MCF 10A (cell line): ENCODE measurements at regions of chr1 and their contacts with region 1.

Region 1: GRCh38 chr1:208132287-208132883 is 111.8 kb downstream of the PLXNA2 start:
- DNase-seq: peak; percentile 96
- H3K4me3 Mint-ChIP-seq: peak overlapping the region; percentile 12
- H3K27ac Mint-ChIP-seq: peak overlapping the region; percentile 74
- H3K4me1 Mint-ChIP-seq: peaks cover 31% of the 10 kb centered on the region
- H3K27me3 Mint-ChIP-seq: no peaks in the 10 kb centered on the region
- CTCF ChIP-seq: peak; percentile 99

Region 2: GRCh38 chr1:208071435-208072031 is 60.9 kb before region 1 on chr1:
- CTCF ChIA-PET with region 1: interaction called, 12 read pairs
- POLR2A ChIA-PET with region 1: no interaction called
- intact Hi-C with region 1: no loop called
- DNase-seq: no peak
- H3K4me3 Mint-ChIP-seq: no peak overlapping the region
- H3K27ac Mint-ChIP-seq: no peak overlapping the region
- H3K4me1 Mint-ChIP-seq: no peaks in the 10 kb centered on the region
- H3K27me3 Mint-ChIP-seq: no peaks in the 10 kb centered on the region
- CTCF ChIP-seq: no peak

Region 3: DNA sequence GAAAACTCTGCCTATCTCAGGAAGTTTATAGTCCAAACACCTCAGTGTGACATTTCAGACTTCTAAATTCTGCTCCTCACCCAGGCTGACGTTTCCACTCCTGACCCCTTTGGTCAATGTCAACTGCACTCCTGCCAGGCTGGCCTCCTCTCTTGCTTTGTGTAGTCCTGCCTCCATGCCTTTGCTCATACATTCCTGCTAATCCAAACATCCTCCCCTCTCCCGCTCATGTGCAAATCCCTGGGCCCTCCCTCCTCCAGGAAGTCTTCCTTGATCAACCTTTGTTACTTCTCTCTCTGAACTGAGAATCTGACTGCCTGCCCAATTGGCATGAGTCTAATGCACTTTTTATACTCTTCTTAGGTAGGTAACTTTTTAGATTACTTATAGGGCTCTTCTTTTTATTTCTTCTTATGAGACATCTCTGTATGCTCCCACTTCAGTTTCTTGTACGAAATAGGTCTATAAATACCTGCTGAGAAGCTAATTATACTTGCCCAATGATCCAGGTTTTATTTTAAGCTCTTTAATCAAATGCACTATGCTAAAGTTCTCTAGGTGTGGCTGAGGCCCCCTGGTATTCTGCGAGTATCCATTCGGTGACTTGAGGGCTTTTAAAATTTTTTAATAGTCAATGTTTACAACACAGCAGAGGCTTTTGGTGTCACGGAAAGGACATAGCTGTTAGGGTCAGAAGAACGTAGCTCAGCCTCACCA is 16.3 kb before region 1 on chr1:
- CTCF ChIA-PET with region 1: interaction called, 89 read pairs
- POLR2A ChIA-PET with region 1: interaction called, 3 read pairs
- intact Hi-C with region 1: no loop called
- DNase-seq: no peak
- H3K4me3 Mint-ChIP-seq: no peak overlapping the region
- H3K27ac Mint-ChIP-seq: no peak overlapping the region
- H3K4me1 Mint-ChIP-seq: no peaks in the 10 kb centered on the region
- H3K27me3 Mint-ChIP-seq: no peaks in the 10 kb centered on the region
- CTCF ChIP-seq: no peak

Region 4: GRCh38 chr1:208170252-208170651 is 37.9 kb after region 1 on chr1:
- CTCF ChIA-PET with region 1: interaction called, 25 read pairs
- POLR2A ChIA-PET with region 1: interaction called, 8 read pairs
- intact Hi-C with region 1: no loop called
- DNase-seq: peak; percentile 62
- H3K4me3 Mint-ChIP-seq: no peak overlapping the region
- H3K27ac Mint-ChIP-seq: no peak overlapping the region
- H3K4me1 Mint-ChIP-seq: peaks cover 41% of the 10 kb centered on the region
- H3K27me3 Mint-ChIP-seq: no peaks in the 10 kb centered on the region
- CTCF ChIP-seq: no peak

Region 5: GRCh38 chr1:208198236-208198635 is 65.9 kb after region 1 on chr1:
- CTCF ChIA-PET with region 1: interaction called, 34 read pairs
- POLR2A ChIA-PET with region 1: interaction called, 8 read pairs
- intact Hi-C with region 1: no loop called
- DNase-seq: no peak
- H3K4me3 Mint-ChIP-seq: no peak overlapping the region
- H3K27ac Mint-ChIP-seq: peak overlapping the region; percentile 52
- H3K4me1 Mint-ChIP-seq: peaks cover 27% of the 10 kb centered on the region
- H3K27me3 Mint-ChIP-seq: no peaks in the 10 kb centered on the region
- CTCF ChIP-seq: no peak

Region 6: GRCh38 chr1:208238710-208239472 is 106.5 kb after region 1 on chr1:
- CTCF ChIA-PET with region 1: interaction called, 586 read pairs
- POLR2A ChIA-PET with region 1: interaction called, 84 read pairs
- intact Hi-C with region 1: loop called (anchors 1 kb)
- DNase-seq: peak; percentile 93
- H3K4me3 Mint-ChIP-seq: no peak overlapping the region
- H3K27ac Mint-ChIP-seq: peak overlapping the region; percentile 81
- H3K4me1 Mint-ChIP-seq: peaks cover 60% of the 10 kb centered on the region
- H3K27me3 Mint-ChIP-seq: no peaks in the 10 kb centered on the region
- CTCF ChIP-seq: peak; percentile 98

Region 7: GRCh38 chr1:208476340-208477041 is 344.1 kb after region 1 on chr1:
- CTCF ChIA-PET with region 1: no interaction called
- POLR2A ChIA-PET with region 1: no interaction called
- intact Hi-C with region 1: no loop called
- DNase-seq: no peak
- H3K4me3 Mint-ChIP-seq: no peak overlapping the region
- H3K27ac Mint-ChIP-seq: no peak overlapping the region
- H3K4me1 Mint-ChIP-seq: peaks cover 7% of the 10 kb centered on the region
- H3K27me3 Mint-ChIP-seq: no peaks in the 10 kb centered on the region
- CTCF ChIP-seq: peak; percentile 11